Posterior cingulate gyrus (tissue), 11 donors: ENCODE measurements at regions of chr22 and their contacts with region 1.

Region 1: GRCh38 chr22:36277482-36278291 is 24.8 kb downstream of the APOL1 start:
- DNase-seq: peak in 9 of 10 donors; percentile 48 to 91 (median 62)

Region 2: GRCh38 chr22:36194971-36195370 is 82.7 kb before region 1 on chr22:
- intact Hi-C with region 1: loop called (anchors 2 kb)
- DNase-seq: peak in 6 of 10 donors; percentile 42 to 92 (median 49)

Region 3: GRCh38 chr22:36239401-36240171 is 38.1 kb before region 1 on chr22 and contains the start of gene APOL2:
- intact Hi-C with region 1: loop called (anchors 5 kb)
- DNase-seq: peak; percentile 77 to 98 (median 88)

Region 4: GRCh38 chr22:36258701-36259614 is 18.7 kb before region 1 on chr22:
- intact Hi-C with region 1: no loop called
- DNase-seq: peak in 1 of 10 donors; percentile 80

Region 5: DNA sequence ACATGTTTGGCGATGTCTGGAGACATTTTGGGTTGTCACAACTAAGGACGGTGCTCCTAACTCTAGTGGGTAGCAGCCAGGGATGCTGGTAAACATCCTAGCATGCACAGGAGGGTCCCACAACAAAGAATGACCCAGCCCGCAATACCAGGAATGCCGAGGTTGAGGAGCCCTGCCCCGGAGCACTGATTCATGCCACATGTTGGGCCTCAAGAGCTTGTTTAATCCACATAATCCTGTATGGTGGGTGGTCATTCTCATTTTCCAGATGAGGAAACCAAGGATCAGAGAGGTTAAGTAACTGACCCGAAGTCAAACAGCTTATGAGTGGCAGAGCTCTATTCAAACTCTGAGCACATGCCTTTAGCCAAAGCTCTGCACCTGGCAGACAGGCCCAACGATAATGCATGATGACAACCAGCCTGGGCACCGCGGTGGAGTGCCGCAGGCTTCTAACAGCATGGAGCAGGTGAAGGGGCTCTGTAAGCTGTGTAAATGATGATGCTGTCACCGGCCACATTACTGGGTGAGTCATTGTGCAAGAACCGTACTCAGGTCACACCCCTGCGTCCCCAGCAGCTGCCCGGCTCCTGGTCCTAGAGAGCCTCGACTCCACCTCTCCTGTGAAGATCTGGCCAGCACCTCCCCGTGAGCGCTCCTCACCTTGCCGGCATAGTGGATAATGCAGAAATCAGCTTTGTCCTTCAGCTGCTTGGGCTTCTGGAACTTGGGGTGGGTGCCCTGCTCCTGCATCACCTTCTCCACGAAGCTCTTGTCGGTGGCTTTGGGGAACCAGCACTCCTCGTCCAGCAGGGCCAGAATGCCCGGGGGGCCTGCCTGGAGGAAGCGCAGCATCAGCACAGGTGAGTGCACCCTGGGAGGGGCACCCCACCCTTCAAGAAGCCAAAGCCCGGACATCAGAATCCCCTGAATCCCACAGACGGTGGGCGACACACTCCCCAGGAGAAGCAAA is 34.0 kb after region 1 on chr22:
- intact Hi-C with region 1: no loop called
- DNase-seq: no peak

Region 6: GRCh38 chr22:36387752-36388518 is 110.2 kb after region 1 on chr22 and contains the start of gene MYH9:
- intact Hi-C with region 1: no loop called
- DNase-seq: peak; percentile 98 to 100 (median 99)